ENCODE measurements at regions of chr9 and their contacts with region 1.

Region 1: DNA sequence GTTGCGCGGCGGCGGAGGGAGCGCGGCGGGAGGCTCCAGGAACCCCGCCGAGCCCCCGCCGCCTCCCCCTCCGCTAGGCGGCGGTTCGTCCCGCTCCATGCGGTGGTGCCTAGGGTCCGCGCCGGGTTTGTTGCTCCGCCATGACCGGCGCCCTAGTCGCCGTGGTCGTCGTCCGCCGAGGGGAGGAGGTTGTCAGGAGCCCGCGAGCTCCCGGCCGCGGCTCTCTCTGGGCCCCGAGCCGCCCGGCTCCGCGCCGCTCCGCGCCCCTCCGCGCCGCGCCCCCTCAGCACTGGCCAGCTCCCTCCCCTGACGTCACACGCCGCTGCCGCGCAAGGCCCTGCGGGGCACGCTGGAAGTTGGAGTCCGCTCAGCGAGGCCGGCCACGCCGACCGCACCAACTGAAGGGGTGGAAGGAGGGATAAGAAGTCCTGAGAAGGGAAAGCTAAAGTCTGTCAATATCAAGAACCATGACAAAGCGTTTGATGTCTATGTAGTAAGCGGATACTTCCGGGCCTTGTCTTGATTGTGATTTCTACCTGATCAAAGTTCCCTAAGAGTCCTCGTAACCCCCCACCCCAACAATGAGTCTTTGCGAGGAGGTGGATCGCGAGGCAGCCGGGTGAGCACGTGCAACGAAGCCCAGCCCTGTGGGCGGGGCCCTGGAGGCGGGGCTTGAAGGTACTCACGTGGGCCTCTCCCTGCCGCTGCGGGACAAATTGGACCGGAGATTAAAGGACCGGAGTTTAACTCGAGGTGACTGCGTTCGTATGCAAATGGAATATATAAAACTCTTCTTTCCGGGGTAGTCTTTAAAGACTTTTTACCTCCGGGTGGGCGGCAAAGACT is at the start of gene NR6A1:
- DNase-seq: peak; percentile 99
- H3K4me3 ChIP-seq: peak within 1 kb of the TSS; percentile 67
- H3K27ac ChIP-seq: peak within 1 kb of the TSS; percentile 94
- H3K4me1 ChIP-seq: peaks cover 29% of the 10 kb centered on the region
- H3K27me3 ChIP-seq: no peaks in the 10 kb centered on the region
- CTCF ChIP-seq: 0 out of 2 replicates have a peak, but pooled peaks have one; percentile 22
- total RNA-seq, gene NR6A1: 5.3 and 6.8 TPM in 2 replicates

Region 2: GRCh38 chr9:124754289-124754688 is 17.0 kb before region 1 on chr9:
- CTCF ChIA-PET with region 1: no interaction called
- POLR2A ChIA-PET with region 1: interaction called, 18 read pairs
- intact Hi-C with region 1: no loop called
- DNase-seq: peak; percentile 66
- H3K4me3 ChIP-seq: no peak overlapping the region
- H3K27ac ChIP-seq: no peak overlapping the region
- H3K4me1 ChIP-seq: peaks cover 56% of the 10 kb centered on the region
- H3K27me3 ChIP-seq: no peaks in the 10 kb centered on the region
- CTCF ChIP-seq: peak; percentile 84

Region 3: DNA sequence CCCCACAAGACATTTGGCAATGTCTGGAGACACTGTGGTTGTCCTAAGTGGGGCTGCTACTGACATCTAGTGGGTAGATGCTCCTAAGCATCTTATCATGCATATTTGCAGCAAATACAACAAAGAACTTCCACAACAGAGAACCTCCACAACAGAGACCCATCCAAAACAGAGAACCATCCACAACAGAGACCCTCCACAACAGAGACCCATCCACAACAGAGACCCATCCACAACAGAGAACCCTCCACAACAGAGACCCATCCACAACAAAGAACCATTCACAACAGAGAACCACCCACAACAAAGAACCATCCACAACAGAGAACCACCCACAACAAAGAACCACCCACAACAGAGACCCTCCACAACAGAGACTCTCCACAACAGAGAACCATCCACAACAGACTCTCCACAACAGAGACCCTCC is 123.5 kb after region 1 on chr9:
- CTCF ChIA-PET with region 1: no interaction called
- POLR2A ChIA-PET with region 1: no interaction called
- intact Hi-C with region 1: loop called (anchors 1 kb)
- DNase-seq: peak; percentile 83
- H3K4me3 ChIP-seq: no peak overlapping the region
- H3K27ac ChIP-seq: no peak overlapping the region
- H3K4me1 ChIP-seq: peaks cover 6% of the 10 kb centered on the region
- H3K27me3 ChIP-seq: no peaks in the 10 kb centered on the region
- CTCF ChIP-seq: peak; percentile 69

Region 4: DNA sequence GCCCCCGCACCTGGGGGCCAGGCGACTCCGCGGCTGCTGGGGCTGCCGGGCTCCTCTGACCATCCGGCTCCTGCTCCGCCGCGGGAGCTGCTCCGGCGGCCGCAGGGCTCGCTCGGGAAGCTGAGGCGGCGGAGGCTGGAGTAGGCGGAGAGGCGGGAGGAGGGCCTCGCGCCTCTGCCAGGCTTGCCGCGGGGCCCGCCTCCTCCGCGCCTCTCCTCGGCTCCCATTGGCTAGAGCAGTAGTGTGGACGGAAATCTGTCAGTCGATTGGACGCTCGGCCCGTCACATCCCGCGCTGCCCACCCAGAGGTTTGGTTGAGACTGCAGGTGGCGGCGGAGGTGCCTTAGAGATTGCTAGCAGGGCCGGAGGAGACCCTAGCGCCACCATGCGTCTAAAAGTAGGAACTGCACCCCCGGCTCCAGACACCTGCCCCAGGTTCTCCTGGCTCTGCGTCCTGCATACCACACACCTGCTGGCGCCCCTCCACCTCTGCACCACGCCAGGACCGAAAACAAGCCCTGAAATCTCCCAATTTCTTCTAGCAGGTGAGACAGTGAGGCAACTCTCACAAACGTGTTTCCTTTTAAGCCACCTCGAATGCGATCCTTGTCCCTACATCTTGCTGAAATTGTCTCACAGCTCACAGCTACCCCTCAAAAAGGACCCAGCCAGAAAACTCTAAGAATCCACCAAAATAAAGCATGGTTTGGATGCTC is 372.3 kb after region 1 on chr9 and contains the start of gene SCAI:
- CTCF ChIA-PET with region 1: no interaction called
- POLR2A ChIA-PET with region 1: no interaction called
- intact Hi-C with region 1: loop called (anchors 5 kb)
- DNase-seq: peak; percentile 100
- H3K4me3 ChIP-seq: peak within 1 kb of the TSS; percentile 64
- H3K27ac ChIP-seq: peak within 1 kb of the TSS; percentile 48
- H3K4me1 ChIP-seq: no peaks in the 10 kb centered on the region
- H3K27me3 ChIP-seq: no peaks in the 10 kb centered on the region
- CTCF ChIP-seq: peak; percentile 99
- total RNA-seq, gene SCAI: 14.1 and 15.1 TPM in 2 replicates

Region 5: GRCh38 chr9:125374443-125375309 is 603.4 kb after region 1 on chr9:
- CTCF ChIA-PET with region 1: no interaction called
- POLR2A ChIA-PET with region 1: no interaction called
- intact Hi-C with region 1: loop called (anchors 2 kb)
- DNase-seq: peak; percentile 89
- H3K4me3 ChIP-seq: peak overlapping the region; percentile 24
- H3K27ac ChIP-seq: no peak overlapping the region
- H3K4me1 ChIP-seq: peaks cover 10% of the 10 kb centered on the region
- H3K27me3 ChIP-seq: no peaks in the 10 kb centered on the region
- CTCF ChIP-seq: peak; percentile 79

Measured in A673 (cell line).